ENCODE measurements at regions of chr2 and their contacts with region 1.

Region 1: GRCh38 chr2:102848366-102848839 is 86.6 kb downstream of the TMEM182 start:
- DNase-seq: no peak
- H3K4me3 ChIP-seq: peak overlapping the region in 2 of 3 donors; percentile 7 to 54
- H3K27ac ChIP-seq: no peak overlapping the region
- H3K4me1 ChIP-seq: no peaks in the 10 kb centered on the region
- H3K27me3 ChIP-seq: no peaks in the 10 kb centered on the region
- CTCF ChIP-seq: no peak
- POLR2A ChIP-seq: no peak

Region 2: DNA sequence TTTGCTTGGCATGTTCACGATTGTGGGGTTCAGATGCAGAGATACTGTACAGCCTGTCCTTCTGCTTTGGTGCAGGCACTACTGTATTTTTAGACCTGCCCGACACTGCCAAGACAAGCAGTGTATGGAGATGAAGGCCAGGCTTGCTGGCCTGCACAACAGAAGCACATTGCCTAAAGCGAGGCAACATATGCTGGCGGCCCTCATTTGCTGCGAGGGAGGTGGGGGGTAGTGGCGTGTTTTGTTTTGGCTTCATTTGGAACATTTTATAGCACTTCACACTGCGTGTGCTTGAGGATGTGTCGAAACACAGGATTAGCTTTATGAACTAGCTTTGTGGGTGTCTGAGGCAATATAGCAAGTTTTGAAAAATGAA is 59.5 kb before region 1 on chr2:
- intact Hi-C with region 1: no loop called
- DNase-seq: no peak
- H3K4me3 ChIP-seq: no peak overlapping the region
- H3K27ac ChIP-seq: peak overlapping the region in 1 of 2 donors; percentile 12
- H3K4me1 ChIP-seq: no peaks in the 10 kb centered on the region
- H3K27me3 ChIP-seq: no peaks in the 10 kb centered on the region
- CTCF ChIP-seq: no peak
- POLR2A ChIP-seq: no peak

Region 3: DNA sequence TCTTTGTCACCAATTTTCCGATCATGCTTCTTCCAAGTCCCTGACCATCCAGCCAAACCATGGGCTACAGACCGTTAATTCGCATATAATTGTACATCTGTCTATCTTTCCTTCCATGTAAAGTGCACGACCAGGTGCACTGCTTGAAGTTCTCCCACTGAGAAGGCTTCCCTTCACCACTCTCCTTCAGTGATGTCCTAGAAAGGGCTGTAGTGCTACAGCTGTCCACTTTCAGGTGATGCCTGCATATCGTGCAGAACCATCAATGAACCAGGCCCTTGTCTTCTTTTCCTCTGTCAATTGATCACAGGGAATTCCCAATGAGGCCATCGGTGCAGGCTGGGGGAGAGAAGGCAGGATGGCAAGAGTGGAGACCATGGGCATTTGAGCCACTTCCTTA is 62.3 kb after region 1 on chr2:
- intact Hi-C with region 1: loop called (anchors 2 kb)
- DNase-seq: no peak
- H3K4me3 ChIP-seq: no peak overlapping the region
- H3K27ac ChIP-seq: no peak overlapping the region
- H3K4me1 ChIP-seq: no peaks in the 10 kb centered on the region
- H3K27me3 ChIP-seq: no peaks in the 10 kb centered on the region
- CTCF ChIP-seq: no peak
- POLR2A ChIP-seq: no peak

Region 4: GRCh38 chr2:103496850-103497249 is 648.4 kb after region 1 on chr2:
- intact Hi-C with region 1: no loop called
- DNase-seq: no peak
- H3K4me3 ChIP-seq: no peak overlapping the region
- H3K27ac ChIP-seq: no peak overlapping the region
- H3K4me1 ChIP-seq: no peaks in the 10 kb centered on the region
- H3K27me3 ChIP-seq: no peaks in the 10 kb centered on the region
- CTCF ChIP-seq: no peak
- POLR2A ChIP-seq: no peak

Region 5: DNA sequence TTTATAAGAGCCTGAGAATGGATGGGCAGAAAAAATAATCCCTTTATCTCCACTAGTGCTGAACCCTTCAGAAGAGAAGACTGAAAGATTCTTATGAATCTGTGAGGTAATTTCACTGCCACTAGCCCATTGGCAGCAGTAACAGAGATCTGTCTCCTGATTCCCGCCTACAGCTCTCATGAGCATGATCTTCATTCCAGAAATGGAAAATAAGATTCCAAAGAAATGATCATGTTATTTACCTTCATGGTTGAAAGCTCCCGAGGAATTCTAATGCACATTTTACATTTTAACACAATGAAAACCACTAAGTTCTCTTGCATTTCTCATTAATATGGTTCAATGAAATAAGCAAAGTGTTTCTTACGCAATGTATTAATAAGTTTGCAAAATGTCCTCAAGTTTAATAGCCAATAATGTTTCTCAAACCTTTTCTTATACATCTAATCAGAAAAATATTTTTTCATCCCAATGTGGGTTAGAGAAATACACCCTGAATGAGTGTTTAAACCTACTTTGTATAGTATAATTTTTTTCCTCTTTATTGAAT is 819.0 kb after region 1 on chr2:
- intact Hi-C with region 1: no loop called
- DNase-seq: no peak
- H3K4me3 ChIP-seq: no peak overlapping the region
- H3K27ac ChIP-seq: no peak overlapping the region
- H3K4me1 ChIP-seq: no peaks in the 10 kb centered on the region
- H3K27me3 ChIP-seq: no peaks in the 10 kb centered on the region
- CTCF ChIP-seq: no peak
- POLR2A ChIP-seq: no peak